ENCODE measurements at regions of chr12 and their contacts with region 1.

Region 1: GRCh38 chr12:32478858-32479725 is 79.7 kb downstream of the FGD4 start:
- DNase-seq: no peak
- H3K4me3 ChIP-seq: no peak overlapping the region
- H3K27ac ChIP-seq: no peak overlapping the region
- H3K4me1 ChIP-seq: no peaks in the 10 kb centered on the region
- H3K27me3 ChIP-seq: no peaks in the 10 kb centered on the region
- CTCF ChIP-seq: no peak
- POLR2A ChIP-seq: no peak

Region 2: DNA sequence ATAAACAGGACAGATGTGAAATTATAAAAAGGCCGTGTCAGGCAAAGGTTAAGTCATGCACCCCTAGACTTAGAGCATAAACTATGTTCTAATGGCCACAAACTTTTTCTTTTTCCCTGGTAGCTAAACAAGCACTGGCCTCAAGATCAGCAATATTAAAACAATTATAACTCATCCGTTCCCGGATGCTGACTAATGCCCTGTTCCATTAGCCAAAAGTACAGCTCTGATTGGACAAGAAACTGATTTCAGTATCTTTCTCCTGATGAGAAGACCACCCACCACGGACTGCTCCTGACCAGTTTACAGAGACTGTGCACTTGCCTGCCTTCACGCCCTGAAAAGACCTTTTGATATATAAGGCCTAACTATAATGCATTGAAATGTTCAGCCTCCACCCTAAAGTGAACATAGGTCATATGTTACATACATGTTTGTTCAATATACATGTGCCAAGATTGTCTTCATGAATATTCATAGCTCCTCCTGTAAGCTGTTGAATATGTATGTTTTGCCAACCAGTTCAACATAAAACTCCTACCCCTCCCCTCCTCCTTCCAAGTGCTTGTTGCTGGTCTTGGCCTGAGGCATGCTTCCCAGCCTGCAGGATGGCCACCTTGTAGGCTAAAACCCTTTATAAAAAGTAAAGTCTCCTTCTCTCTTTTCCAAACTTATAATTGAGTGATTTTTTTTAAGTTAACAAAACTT is 1945.4 kb before region 1 on chr12:
- intact Hi-C with region 1: no loop called
- DNase-seq: no peak
- H3K4me3 ChIP-seq: no peak overlapping the region
- H3K27ac ChIP-seq: no peak overlapping the region
- H3K4me1 ChIP-seq: no peaks in the 10 kb centered on the region
- H3K27me3 ChIP-seq: no peaks in the 10 kb centered on the region
- CTCF ChIP-seq: no peak
- POLR2A ChIP-seq: no peak

Region 3: GRCh38 chr12:33817713-33818112 is 1338.6 kb after region 1 on chr12:
- intact Hi-C with region 1: loop called (anchors 5 kb)
- DNase-seq: no peak
- H3K4me3 ChIP-seq: no peak overlapping the region
- H3K27ac ChIP-seq: no peak overlapping the region
- H3K4me1 ChIP-seq: no peaks in the 10 kb centered on the region
- H3K27me3 ChIP-seq: no peaks in the 10 kb centered on the region
- CTCF ChIP-seq: no peak
- POLR2A ChIP-seq: no peak